CD4-positive, alpha-beta T cell (primary cell): ENCODE measurements at regions of chr2 and their contacts with region 1.

Region 1: GRCh38 chr2:237923481-237924163 is 43.2 kb upstream of the UBE2F start:
- DNase-seq: peak; percentile 38 to 91 (median 77)
- ATAC-seq: peak; percentile 99
- H3K4me3 ChIP-seq: peak overlapping the region; percentile 50
- H3K4me3 Mint-ChIP-seq: peak overlapping the region; percentile 54
- H3K27ac ChIP-seq: no peak overlapping the region
- H3K27ac Mint-ChIP-seq: no peak overlapping the region
- H3K4me1 ChIP-seq: peaks cover 20% of the 10 kb centered on the region
- H3K4me1 Mint-ChIP-seq: peaks cover 14% of the 10 kb centered on the region
- H3K27me3 ChIP-seq: no peaks in the 10 kb centered on the region
- H3K27me3 Mint-ChIP-seq: no peaks in the 10 kb centered on the region
- CTCF ChIP-seq: peak; percentile 94

Region 2: DNA sequence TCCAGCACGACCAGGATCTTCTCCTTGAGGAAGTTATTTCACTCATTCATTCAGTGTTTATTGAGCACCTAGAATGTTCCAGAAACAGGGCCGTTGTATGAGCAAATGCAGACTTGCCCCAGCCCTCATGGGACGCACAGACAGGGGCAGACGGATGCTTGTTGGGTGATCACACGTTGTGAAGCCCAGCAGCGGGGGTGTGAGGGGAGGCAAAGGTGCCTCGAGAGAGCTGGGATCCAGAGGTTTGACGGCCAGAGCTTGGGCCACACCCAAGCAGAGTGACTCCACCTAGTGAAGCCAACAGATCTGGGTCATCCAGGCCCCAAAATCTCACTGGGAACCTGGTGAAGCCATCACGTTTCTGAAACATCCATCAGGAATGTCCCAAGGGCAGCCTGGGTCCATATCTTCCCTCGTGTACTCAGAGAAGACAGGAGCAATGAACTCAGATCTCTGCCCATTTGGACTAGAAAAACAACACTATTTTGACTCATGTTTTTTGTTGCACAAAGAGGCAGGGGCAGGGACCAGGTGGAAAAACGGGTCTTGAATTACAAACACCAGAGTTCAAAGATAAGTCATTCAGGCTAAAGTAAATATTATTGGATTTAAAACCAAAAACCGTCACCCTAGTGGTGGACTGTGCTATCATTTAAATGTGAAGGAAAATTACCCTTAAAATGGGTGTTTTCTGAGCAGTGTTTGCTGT is 179.9 kb before region 1 on chr2:
- CTCF ChIA-PET with region 1: no interaction called
- POLR2A ChIA-PET with region 1: no interaction called
- intact Hi-C with region 1: no loop called
- DNase-seq: no peak
- ATAC-seq: no peak
- H3K4me3 ChIP-seq: no peak overlapping the region
- H3K4me3 Mint-ChIP-seq: peak overlapping the region; percentile 8
- H3K27ac ChIP-seq: peak overlapping the region in 1 of 2 donors; percentile 13
- H3K27ac Mint-ChIP-seq: peak overlapping the region; percentile 78
- H3K4me1 ChIP-seq: peaks cover 40% of the 10 kb centered on the region
- H3K4me1 Mint-ChIP-seq: peaks cover 57% of the 10 kb centered on the region
- H3K27me3 ChIP-seq: no peaks in the 10 kb centered on the region
- H3K27me3 Mint-ChIP-seq: no peaks in the 10 kb centered on the region
- CTCF ChIP-seq: no peak

Region 3: GRCh38 chr2:237766340-237766739 is 157.3 kb before region 1 on chr2:
- CTCF ChIA-PET with region 1: no interaction called
- POLR2A ChIA-PET with region 1: no interaction called
- intact Hi-C with region 1: no loop called
- DNase-seq: no peak
- ATAC-seq: no peak
- H3K4me3 ChIP-seq: no peak overlapping the region
- H3K4me3 Mint-ChIP-seq: no peak overlapping the region
- H3K27ac ChIP-seq: no peak overlapping the region
- H3K27ac Mint-ChIP-seq: peak overlapping the region; percentile 49
- H3K4me1 ChIP-seq: no peaks in the 10 kb centered on the region
- H3K4me1 Mint-ChIP-seq: peaks cover 13% of the 10 kb centered on the region
- H3K27me3 ChIP-seq: no peaks in the 10 kb centered on the region
- H3K27me3 Mint-ChIP-seq: no peaks in the 10 kb centered on the region
- CTCF ChIP-seq: no peak

Region 4: GRCh38 chr2:238015705-238016104 is 92.1 kb after region 1 on chr2:
- CTCF ChIA-PET with region 1: no interaction called
- POLR2A ChIA-PET with region 1: no interaction called
- intact Hi-C with region 1: loop called in 1 of 2 experiments (anchors 5 kb)
- DNase-seq: peak in 2 of 14 experiments; percentile 4 to 27
- ATAC-seq: no peak
- H3K4me3 ChIP-seq: no peak overlapping the region
- H3K4me3 Mint-ChIP-seq: no peak overlapping the region
- H3K27ac ChIP-seq: no peak overlapping the region
- H3K27ac Mint-ChIP-seq: no peak overlapping the region
- H3K4me1 ChIP-seq: peaks cover 3% of the 10 kb centered on the region
- H3K4me1 Mint-ChIP-seq: peaks cover 9% of the 10 kb centered on the region
- H3K27me3 ChIP-seq: no peaks in the 10 kb centered on the region
- H3K27me3 Mint-ChIP-seq: no peaks in the 10 kb centered on the region
- CTCF ChIP-seq: no peak

Region 5: GRCh38 chr2:238636269-238637073 is 712.8 kb after region 1 on chr2:
- CTCF ChIA-PET with region 1: no interaction called
- POLR2A ChIA-PET with region 1: no interaction called
- intact Hi-C with region 1: no loop called
- DNase-seq: no peak
- ATAC-seq: no peak
- H3K4me3 ChIP-seq: no peak overlapping the region
- H3K4me3 Mint-ChIP-seq: no peak overlapping the region
- H3K27ac ChIP-seq: no peak overlapping the region
- H3K27ac Mint-ChIP-seq: no peak overlapping the region
- H3K4me1 ChIP-seq: no peaks in the 10 kb centered on the region
- H3K4me1 Mint-ChIP-seq: no peaks in the 10 kb centered on the region
- H3K27me3 ChIP-seq: peaks cover 5 to 7% of the 10 kb centered on the region in 2 experiments
- H3K27me3 Mint-ChIP-seq: peaks cover 20% of the 10 kb centered on the region
- CTCF ChIP-seq: no peak